PC-3 (cell line): ENCODE measurements at regions of chr1 and their contacts with region 1.

Region 1: GRCh38 chr1:179293340-179294327 is at the start of gene SOAT1:
- DNase-seq: peak; percentile 82
- ATAC-seq: peak; percentile 84
- H3K4me3 ChIP-seq: peak within 1 kb of the TSS; percentile 85
- H3K27ac ChIP-seq: peak within 1 kb of the TSS; percentile 64
- H3K4me1 ChIP-seq: peaks cover 20% of the 10 kb centered on the region
- H3K27me3 ChIP-seq: no peaks in the 10 kb centered on the region
- CTCF ChIP-seq: no peak
- total RNA-seq, gene SOAT1: 8.6 and 10.5 TPM in 2 replicates

Region 2: DNA sequence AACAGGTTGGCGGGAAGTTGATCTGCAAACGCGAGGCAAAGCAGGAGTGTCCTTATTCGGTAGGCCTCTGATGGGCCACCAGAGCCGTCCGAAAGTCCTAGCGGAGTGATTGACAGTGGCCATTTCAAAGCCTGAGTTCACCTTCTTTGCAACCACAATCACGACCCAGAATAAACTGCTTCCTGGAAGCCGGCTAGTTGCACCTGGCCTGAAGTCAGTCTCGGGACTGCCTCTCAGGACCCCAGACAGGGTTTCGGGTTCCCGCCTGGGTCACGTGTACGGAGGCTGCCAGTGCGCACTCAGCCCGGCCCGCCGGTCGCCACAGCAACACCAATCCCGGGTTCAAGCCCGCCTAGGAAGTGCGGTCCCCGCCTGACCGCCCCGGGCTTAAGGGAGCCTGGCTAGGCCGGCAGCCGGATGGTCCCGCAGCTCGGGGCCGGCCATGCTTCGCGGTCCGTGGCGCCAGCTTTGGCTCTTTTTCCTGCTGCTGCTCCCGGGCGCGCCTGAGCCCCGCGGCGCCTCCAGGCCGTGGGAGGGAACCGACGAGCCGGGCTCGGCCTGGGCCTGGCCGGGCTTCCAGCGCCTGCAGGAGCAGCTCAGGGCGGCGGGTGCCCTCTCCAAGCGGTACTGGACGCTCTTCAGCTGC is 211.8 kb before region 1 on chr1 and contains the start of gene TOR3A:
- CTCF ChIA-PET with region 1: no interaction called
- POLR2A ChIA-PET with region 1: no interaction called
- intact Hi-C with region 1: loop called (anchors 2 kb)
- DNase-seq: peak; percentile 83
- ATAC-seq: peak; percentile 86
- H3K4me3 ChIP-seq: peak within 1 kb of the TSS; percentile 84
- H3K27ac ChIP-seq: peak within 1 kb of the TSS; percentile 41
- H3K4me1 ChIP-seq: peaks cover 24% of the 10 kb centered on the region
- H3K27me3 ChIP-seq: no peaks in the 10 kb centered on the region
- CTCF ChIP-seq: no peak
- total RNA-seq, gene TOR3A: 70.8 and 95.5 TPM in 2 replicates

Region 3: GRCh38 chr1:179129702-179130473 is 163.7 kb before region 1 on chr1:
- CTCF ChIA-PET with region 1: no interaction called
- POLR2A ChIA-PET with region 1: no interaction called
- intact Hi-C with region 1: loop called (anchors 5 kb)
- DNase-seq: no peak
- ATAC-seq: no peak
- H3K4me3 ChIP-seq: no peak overlapping the region; the same call in 1 of the 2 replicates
- H3K27ac ChIP-seq: peak overlapping the region; percentile 95
- H3K4me1 ChIP-seq: peaks cover 50% of the 10 kb centered on the region
- H3K27me3 ChIP-seq: no peaks in the 10 kb centered on the region
- CTCF ChIP-seq: no peak

Region 4: DNA sequence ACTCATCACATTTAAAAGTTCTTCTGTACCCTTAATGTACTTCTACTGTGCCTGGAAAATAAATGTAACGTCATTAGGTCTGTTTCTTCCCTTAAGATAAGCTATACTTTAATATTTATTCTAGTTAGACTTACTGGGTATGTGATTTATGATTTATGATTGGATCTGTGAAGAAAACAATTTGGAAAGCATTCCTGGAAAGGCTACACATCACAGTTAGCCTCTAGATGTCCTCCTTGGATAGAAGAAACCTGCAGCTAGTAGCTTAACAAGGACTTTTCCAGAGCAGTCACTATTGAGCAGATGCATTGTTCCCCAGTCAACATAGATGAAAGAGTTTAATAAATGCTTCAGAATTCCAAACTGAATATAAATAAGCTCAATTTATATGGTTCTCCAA is 42.0 kb before region 1 on chr1:
- CTCF ChIA-PET with region 1: interaction called, 3 read pairs
- POLR2A ChIA-PET with region 1: interaction called, 4 read pairs
- intact Hi-C with region 1: loop called (anchors 1 kb)
- DNase-seq: peak; percentile 44
- ATAC-seq: peak; percentile 71
- H3K4me3 ChIP-seq: no peak overlapping the region
- H3K27ac ChIP-seq: no peak overlapping the region
- H3K4me1 ChIP-seq: no peaks in the 10 kb centered on the region
- H3K27me3 ChIP-seq: no peaks in the 10 kb centered on the region
- CTCF ChIP-seq: peak; percentile 62